ENCODE measurements at regions of chr17 and their contacts with region 1.

Region 1: DNA sequence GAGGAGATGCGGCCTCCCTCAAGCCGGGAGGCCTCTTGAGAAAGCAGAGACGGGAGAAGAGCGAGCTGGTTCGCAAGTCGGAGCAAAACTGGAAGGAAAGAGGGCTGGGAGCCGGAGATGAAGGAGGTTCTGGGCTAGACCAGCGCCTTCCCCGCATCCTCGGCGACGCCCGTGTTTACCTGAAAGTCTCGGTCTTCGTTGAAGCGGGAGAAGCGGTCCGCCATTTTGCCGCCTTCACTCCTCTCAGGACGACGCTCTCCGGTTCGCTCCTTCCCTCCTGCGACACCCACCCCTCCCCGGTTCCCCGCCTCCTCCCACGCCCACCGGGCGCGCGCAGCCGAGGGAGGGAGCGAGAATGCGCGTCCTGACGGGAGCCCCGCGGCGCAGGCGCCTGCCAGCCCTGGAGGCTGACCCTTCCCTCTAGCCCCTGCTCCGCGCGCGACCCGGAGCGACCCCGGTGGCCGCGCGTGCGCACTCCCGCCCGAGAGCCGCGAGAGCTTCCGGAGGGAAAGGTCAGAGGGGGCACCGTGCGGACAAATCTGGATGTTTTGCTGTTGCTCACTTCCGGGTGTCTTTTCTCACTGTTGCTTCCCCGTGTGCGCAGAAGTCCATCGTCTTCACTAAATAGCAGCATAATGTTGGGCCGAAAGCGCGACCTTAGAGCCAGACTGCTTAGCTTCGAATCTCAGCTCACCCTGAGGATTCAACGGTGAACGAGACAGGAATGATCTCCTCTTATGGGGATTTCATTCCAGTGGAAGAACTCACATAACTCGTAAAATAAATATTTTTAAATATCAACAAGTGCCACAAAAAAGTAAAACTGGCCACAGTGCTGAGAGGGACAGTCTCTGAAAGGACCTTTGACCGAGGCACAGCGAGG is at the start of gene GPATCH8:
- DNase-seq: peak; percentile 94 to 98 (median 96)
- ATAC-seq: peak; percentile 98 to 99 (median 99)
- H3K4me3 ChIP-seq: peak within 1 kb of the TSS; percentile 69 to 99 (median 84)
- H3K27ac ChIP-seq: peak within 1 kb of the TSS; percentile 68 to 94 (median 90)
- H3K4me1 ChIP-seq: peaks cover 0 to 51% (median 33%) of the 10 kb centered on the region in 12 donors
- H3K27me3 ChIP-seq: peaks cover 0 to 9% (median 0%) of the 10 kb centered on the region in 9 donors
- CTCF ChIP-seq: no peak
- POLR2A ChIP-seq: peak; percentile 20 to 76
- total RNA-seq, gene GPATCH8: 17.5 to 24.9 (median 21.5) TPM

Region 2: DNA sequence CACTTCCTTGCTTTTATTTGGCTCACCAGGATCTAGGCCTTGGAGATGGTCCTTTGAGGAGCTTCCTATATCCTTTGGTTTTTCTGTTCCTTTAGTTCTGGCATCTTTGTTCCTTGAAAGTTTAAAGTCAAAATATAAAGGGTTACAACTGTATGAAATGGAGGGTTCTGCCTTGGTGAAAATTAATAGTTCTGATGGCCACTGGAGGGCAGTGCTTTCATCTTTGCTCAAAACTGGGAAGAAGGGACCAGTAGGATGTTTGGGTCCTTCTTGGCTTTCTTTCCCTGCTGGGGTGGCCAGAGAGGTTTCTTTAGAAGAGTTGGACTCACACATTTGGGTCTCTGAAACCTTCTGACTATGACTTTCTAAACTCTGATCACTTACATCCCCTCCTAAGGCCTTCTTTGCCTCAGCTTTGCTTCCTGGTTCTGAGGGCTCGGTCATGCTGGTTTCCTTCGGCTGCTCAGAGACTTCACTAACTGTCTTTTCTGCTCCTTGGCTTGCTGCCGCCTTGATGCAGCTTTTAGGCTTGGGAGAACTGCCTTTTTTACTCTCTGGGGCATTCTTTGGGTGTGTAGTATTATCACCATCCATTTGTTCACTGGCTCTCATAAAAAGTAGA is 103.1 kb before region 1 on chr17:
- intact Hi-C with region 1: loop called in 1 of 10 experiments (anchors 10 kb)
- DNase-seq: no peak
- ATAC-seq: peak in 1 of 4 donors; percentile 31
- H3K4me3 ChIP-seq: no peak overlapping the region
- H3K27ac ChIP-seq: no peak overlapping the region
- H3K4me1 ChIP-seq: no peaks in the 10 kb centered on the region
- H3K27me3 ChIP-seq: no peaks in the 10 kb centered on the region
- CTCF ChIP-seq: peak in 11 of 12 donors; percentile 8 to 47 (median 33)
- POLR2A ChIP-seq: no peak

Region 3: GRCh38 chr17:44438636-44439035 is 64.8 kb before region 1 on chr17:
- intact Hi-C with region 1: no loop called
- DNase-seq: no peak
- ATAC-seq: peak; percentile 85 to 94 (median 89)
- H3K4me3 ChIP-seq: no peak overlapping the region
- H3K27ac ChIP-seq: peak overlapping the region in 4 of 12 donors; percentile 16 to 48 (median 30)
- H3K4me1 ChIP-seq: peaks cover 0 to 23% (median 14%) of the 10 kb centered on the region in 12 donors
- H3K27me3 ChIP-seq: no peaks in the 10 kb centered on the region
- CTCF ChIP-seq: no peak
- POLR2A ChIP-seq: no peak